ENCODE measurements at regions of chr12 and their contacts with region 1.

Region 1: GRCh38 chr12:19915392-19916195 is 452.7 kb upstream of the PDE3A start:
- DNase-seq: no peak
- ATAC-seq: peak; percentile 45 to 84 (median 69)
- H3K4me3 ChIP-seq: no peak overlapping the region
- H3K27ac ChIP-seq: peak overlapping the region in 9 of 12 donors; percentile 10 to 59 (median 45)
- H3K4me1 ChIP-seq: peaks cover 0 to 26% (median 3%) of the 10 kb centered on the region in 12 donors
- H3K27me3 ChIP-seq: no peaks in the 10 kb centered on the region
- CTCF ChIP-seq: peak; percentile 41 to 76 (median 64)
- POLR2A ChIP-seq: no peak

Region 2: GRCh38 chr12:20188930-20189653 is 273.5 kb after region 1 on chr12:
- intact Hi-C with region 1: loop called in 1 of 10 experiments (anchors 10 kb)
- DNase-seq: peak in 1 of 5 donors; percentile 35
- ATAC-seq: peak in 2 of 4 donors; percentile 64 to 66
- H3K4me3 ChIP-seq: no peak overlapping the region
- H3K27ac ChIP-seq: peak overlapping the region in 1 of 12 donors; percentile 20
- H3K4me1 ChIP-seq: peaks cover 0 to 17% (median 0%) of the 10 kb centered on the region in 12 donors
- H3K27me3 ChIP-seq: no peaks in the 10 kb centered on the region
- CTCF ChIP-seq: no peak
- POLR2A ChIP-seq: no peak

Region 3: DNA sequence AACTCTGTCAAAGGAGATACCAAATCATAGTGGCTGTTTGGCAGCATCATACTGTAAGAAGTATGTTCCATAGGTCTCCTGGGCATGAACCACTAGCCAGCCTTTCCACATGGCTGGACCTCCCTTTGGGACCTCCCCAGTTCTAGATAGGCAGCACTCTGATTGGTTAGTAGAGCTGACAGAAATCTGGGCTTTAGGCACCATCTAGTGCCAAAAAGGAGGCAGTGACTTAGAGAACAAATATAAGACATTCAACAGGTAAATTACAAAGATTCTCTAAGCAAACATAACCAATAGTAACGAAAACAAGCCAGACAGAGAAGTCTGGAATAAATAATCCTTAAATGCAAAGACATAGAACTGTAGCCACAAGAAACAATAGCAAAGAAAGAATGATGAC is 304.7 kb after region 1 on chr12:
- intact Hi-C with region 1: loop called in 3 of 10 experiments (anchors 5 to 10 kb)
- DNase-seq: no peak
- ATAC-seq: peak in 3 of 4 donors; percentile 32 to 39 (median 34)
- H3K4me3 ChIP-seq: no peak overlapping the region
- H3K27ac ChIP-seq: no peak overlapping the region
- H3K4me1 ChIP-seq: no peaks in the 10 kb centered on the region
- H3K27me3 ChIP-seq: no peaks in the 10 kb centered on the region
- CTCF ChIP-seq: peak in 7 of 12 donors; percentile 12 to 31 (median 22)
- POLR2A ChIP-seq: no peak

Region 4: DNA sequence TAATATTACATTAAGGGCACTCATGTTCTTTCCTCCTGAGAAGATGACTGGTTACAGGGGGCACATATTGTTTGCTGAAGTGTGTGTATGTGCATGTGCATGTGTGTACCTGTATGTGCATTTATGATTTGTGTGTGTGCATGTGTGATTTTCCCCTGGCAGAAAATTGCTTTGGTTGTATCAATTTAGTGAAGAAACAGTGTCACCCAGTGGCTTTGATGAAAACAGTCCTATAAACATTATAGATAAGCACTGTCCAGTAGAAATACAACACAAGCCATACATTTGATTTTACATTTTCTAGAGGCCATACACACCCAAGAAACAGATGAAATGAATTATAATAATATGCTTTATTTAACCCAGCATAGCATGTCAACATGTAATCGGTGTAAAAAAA is 461.4 kb after region 1 on chr12:
- intact Hi-C with region 1: loop called in 2 of 10 experiments (anchors 2 to 5 kb)
- DNase-seq: no peak
- ATAC-seq: peak in 2 of 4 donors; percentile 27 to 36
- H3K4me3 ChIP-seq: peak overlapping the region in 8 of 12 donors; percentile 7 to 88 (median 78)
- H3K27ac ChIP-seq: peak overlapping the region in 11 of 12 donors; percentile 1 to 98 (median 95)
- H3K4me1 ChIP-seq: peaks cover 0 to 42% (median 15%) of the 10 kb centered on the region in 12 donors
- H3K27me3 ChIP-seq: no peaks in the 10 kb centered on the region
- CTCF ChIP-seq: peak in 9 of 12 donors; percentile 23 to 53 (median 42)
- POLR2A ChIP-seq: no peak

Region 5: GRCh38 chr12:20601668-20602280 is 686.2 kb after region 1 on chr12:
- intact Hi-C with region 1: loop called in 3 of 10 experiments (anchors 10 kb)
- DNase-seq: no peak
- ATAC-seq: no peak
- H3K4me3 ChIP-seq: no peak overlapping the region
- H3K27ac ChIP-seq: peak overlapping the region in 11 of 12 donors; percentile 15 to 70 (median 61)
- H3K4me1 ChIP-seq: peaks cover 0 to 46% (median 16%) of the 10 kb centered on the region in 12 donors
- H3K27me3 ChIP-seq: no peaks in the 10 kb centered on the region
- CTCF ChIP-seq: peak; percentile 11 to 65 (median 46)
- POLR2A ChIP-seq: no peak

Region 6: DNA sequence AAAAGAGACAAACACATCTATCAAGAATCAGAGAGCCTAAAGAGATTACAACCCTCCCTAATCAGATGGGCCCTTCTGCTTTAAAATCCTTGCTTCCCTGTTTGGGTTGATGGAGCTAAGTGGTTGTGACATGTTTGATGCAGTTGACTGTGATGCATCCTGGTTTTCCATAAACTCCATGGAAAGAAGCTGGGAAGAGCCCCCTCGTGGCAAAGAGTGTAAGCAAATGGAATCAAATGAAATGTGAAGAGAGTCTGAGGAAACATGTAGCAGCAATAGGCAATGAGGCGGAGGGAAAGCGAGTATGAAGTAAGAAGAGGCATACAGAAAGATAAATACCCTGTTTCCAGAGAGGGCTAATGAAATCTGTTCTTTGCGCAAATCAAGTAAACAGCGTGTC is 709.1 kb after region 1 on chr12:
- intact Hi-C with region 1: loop called in 2 of 10 experiments (anchors 10 kb)
- DNase-seq: no peak
- ATAC-seq: no peak
- H3K4me3 ChIP-seq: no peak overlapping the region
- H3K27ac ChIP-seq: no peak overlapping the region
- H3K4me1 ChIP-seq: peaks cover 0 to 41% (median 11%) of the 10 kb centered on the region in 12 donors
- H3K27me3 ChIP-seq: no peaks in the 10 kb centered on the region
- CTCF ChIP-seq: peak in 11 of 12 donors; percentile 10 to 53 (median 26)
- POLR2A ChIP-seq: no peak